ENCODE measurements at regions of chr10 and their contacts with region 1.

Region 1: GRCh38 chr10:103602028-103602851 is 108.7 kb downstream of the NEURL1 start:
- DNase-seq: no peak
- H3K4me3 ChIP-seq: no peak overlapping the region
- H3K27ac ChIP-seq: no peak overlapping the region
- H3K4me1 ChIP-seq: peaks cover 3% of the 10 kb centered on the region
- H3K27me3 ChIP-seq: no peaks in the 10 kb centered on the region
- CTCF ChIP-seq: no peak
- POLR2A ChIP-seq: no peak

Region 2: DNA sequence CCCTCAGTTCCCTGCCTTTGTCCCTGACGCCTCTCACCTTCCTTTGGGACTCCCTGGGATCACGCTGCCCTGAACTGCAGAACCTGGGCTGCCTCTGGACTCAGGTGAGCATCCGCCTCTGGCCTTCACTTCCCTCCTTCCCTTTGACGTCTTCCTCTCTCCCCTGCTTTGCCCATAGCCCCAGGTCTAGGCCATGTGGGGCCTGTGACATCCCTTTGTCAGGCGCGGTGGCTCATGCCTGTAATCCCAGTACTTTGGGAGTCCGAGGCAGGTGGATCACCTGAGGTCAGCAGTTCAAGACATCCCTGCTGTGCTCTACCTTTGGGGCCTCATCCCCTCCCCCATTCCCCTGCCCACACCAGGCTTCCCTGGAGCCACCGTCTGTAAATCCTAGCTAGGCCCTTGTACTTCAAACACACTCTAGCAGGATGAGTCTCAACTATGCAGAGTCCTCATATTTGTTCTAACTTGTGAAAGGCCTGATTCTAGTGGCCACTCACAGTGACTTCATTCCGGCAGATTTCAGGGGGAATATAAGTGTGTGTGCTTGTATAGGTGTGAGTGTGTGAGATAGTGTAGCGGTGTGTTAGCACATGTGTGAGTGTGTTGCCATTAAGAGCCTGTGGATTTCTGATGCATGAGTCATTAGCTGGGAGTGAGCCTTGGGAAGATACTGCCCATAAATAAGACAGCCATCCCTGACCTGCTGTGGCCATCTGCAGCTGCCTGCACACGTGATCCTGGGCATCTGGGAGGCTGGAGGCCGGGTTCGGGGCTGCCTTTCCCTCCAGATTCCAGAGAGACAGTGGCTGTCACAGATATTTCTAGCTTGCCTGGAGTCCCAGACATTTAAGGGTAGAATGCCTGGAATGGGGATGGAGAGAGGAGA is 110.5 kb before region 1 on chr10:
- intact Hi-C with region 1: no loop called
- DNase-seq: no peak
- H3K4me3 ChIP-seq: no peak overlapping the region
- H3K27ac ChIP-seq: no peak overlapping the region
- H3K4me1 ChIP-seq: no peaks in the 10 kb centered on the region
- H3K27me3 ChIP-seq: no peaks in the 10 kb centered on the region
- CTCF ChIP-seq: no peak
- POLR2A ChIP-seq: no peak

Region 3: GRCh38 chr10:103519361-103520152 is 82.7 kb before region 1 on chr10:
- intact Hi-C with region 1: no loop called
- DNase-seq: no peak
- H3K4me3 ChIP-seq: no peak overlapping the region
- H3K27ac ChIP-seq: no peak overlapping the region
- H3K4me1 ChIP-seq: peaks cover 3% of the 10 kb centered on the region
- H3K27me3 ChIP-seq: no peaks in the 10 kb centered on the region
- CTCF ChIP-seq: no peak
- POLR2A ChIP-seq: no peak

Region 4: DNA sequence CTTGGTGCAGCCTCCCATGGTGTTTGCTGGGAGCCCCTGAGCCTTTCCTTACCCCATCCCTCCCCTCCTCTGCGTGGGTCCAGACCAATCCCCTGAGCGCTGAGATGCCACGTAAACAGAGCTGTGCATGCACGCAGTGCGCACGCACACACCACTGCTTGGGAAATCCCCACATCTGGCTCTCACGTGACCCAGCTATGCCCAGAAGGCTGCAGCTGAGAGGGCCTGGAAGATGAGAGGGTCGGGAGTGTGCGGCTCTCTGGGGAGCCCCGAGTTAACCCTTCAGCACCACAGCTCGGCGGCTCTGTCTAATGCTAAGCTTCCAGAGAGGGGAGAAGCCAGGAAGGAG is 75.9 kb after region 1 on chr10:
- intact Hi-C with region 1: loop called (anchors 5 kb)
- DNase-seq: peak; percentile 88
- H3K4me3 ChIP-seq: no peak overlapping the region
- H3K27ac ChIP-seq: peak overlapping the region; percentile 73 to 84
- H3K4me1 ChIP-seq: peaks cover 23% of the 10 kb centered on the region
- H3K27me3 ChIP-seq: no peaks in the 10 kb centered on the region
- CTCF ChIP-seq: no peak
- POLR2A ChIP-seq: no peak